ENCODE measurements at regions of chr12 and their contacts with region 1.

Region 1: GRCh38 chr12:50504798-50505385 is at the start of gene DIP2B:
- DNase-seq: peak; percentile 92 to 96 (median 93)
- H3K4me3 ChIP-seq: peak within 1 kb of the TSS; percentile 90
- H3K4me3 Mint-ChIP-seq: peak within 1 kb of the TSS; percentile 91 to 95 (median 93)
- H3K27ac ChIP-seq: peak within 1 kb of the TSS; percentile 74
- H3K27ac Mint-ChIP-seq: peak within 1 kb of the TSS; percentile 81 to 99 (median 92)
- H3K4me1 ChIP-seq: peaks cover 50% of the 10 kb centered on the region
- H3K4me1 Mint-ChIP-seq: peaks cover 43 to 50% (median 50%) of the 10 kb centered on the region in 3 donors
- H3K27me3 ChIP-seq: no peaks in the 10 kb centered on the region
- H3K27me3 Mint-ChIP-seq: peaks cover 0 to 1% of the 10 kb centered on the region in 2 donors
- total RNA-seq, gene DIP2B: 20.4 to 21.0 TPM

Region 2: DNA sequence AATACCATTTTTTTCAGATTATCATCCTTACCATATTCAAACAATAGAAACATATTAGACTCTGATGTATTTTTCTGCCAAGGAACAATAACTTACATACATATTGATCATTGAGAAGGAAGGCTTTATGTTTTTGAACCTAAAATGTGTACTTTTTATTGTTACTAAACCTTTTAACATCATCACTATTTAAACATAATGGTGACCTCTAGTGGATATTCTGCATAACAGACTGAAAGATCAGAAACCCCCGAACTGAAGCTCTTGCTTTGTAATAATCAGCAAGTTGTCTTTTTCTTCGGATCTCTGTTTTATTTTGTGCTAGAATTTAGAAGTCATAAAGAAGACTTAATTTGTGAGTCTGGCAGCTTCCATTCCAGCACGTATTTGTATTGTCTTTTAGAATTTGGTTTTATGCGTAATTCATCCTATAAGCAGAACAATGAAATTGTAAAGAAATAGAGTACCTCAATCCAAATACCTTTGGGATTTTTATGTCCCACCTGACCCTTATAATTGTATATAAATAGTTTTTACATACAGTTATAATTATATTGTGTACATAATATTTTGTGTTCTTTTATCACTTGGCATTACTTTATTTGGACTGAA is 133.1 kb after region 1 on chr12:
- CTCF ChIA-PET with region 1: interaction called, 32 read pairs
- POLR2A ChIA-PET with region 1: interaction called, 9 read pairs
- DNase-seq: peak in 2 of 5 donors; percentile 43 to 46
- H3K4me3 ChIP-seq: no peak overlapping the region
- H3K4me3 Mint-ChIP-seq: no peak overlapping the region
- H3K27ac ChIP-seq: no peak overlapping the region
- H3K27ac Mint-ChIP-seq: peak overlapping the region in 4 of 8 donors; percentile 36 to 86 (median 66)
- H3K4me1 ChIP-seq: no peaks in the 10 kb centered on the region
- H3K4me1 Mint-ChIP-seq: peaks cover 9 to 10% (median 10%) of the 10 kb centered on the region in 3 donors
- H3K27me3 ChIP-seq: no peaks in the 10 kb centered on the region
- H3K27me3 Mint-ChIP-seq: peaks cover 0 to 2% of the 10 kb centered on the region in 2 donors